MCF 10A (cell line): ENCODE measurements at regions of chr17 and their contacts with region 1.

Region 1: DNA sequence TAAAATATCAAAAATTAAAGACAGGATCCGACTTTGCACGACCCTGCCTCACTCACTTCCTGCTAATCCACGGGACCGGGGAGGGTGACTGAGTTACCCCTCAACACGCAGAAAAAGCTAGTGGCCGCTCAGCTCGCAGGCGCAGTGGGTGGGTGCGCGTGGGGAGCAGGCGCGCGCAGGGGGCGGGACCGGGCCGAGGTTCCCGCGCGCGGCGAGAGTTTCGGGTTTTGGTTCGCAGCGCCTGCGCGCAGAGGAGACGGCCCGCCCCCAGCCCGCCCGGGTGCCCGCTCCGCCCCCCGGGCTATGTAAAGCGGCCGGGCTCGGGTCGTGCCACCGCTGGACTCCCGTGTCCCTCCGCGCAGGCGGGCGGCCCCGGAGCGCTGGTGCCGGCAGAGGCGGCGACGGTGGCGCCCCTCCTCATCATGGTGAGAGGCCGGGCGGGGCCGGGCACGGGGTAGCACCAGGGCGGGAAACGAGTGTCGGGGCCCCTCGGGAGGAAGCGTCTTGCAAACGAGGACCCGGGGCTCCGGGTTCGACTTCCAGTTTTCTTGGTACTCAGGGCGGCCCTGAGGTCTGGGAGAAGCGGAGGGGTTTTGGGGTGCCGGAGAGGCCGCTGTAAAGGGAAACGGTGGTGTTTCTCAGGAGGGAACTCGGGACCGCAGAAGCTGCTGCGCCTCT is at the start of gene CNP:
- DNase-seq: peak; percentile 88
- H3K4me3 Mint-ChIP-seq: peak within 1 kb of the TSS; percentile 79
- H3K27ac Mint-ChIP-seq: peak within 1 kb of the TSS; percentile 77
- H3K4me1 Mint-ChIP-seq: peaks cover 25% of the 10 kb centered on the region
- H3K27me3 Mint-ChIP-seq: no peaks in the 10 kb centered on the region
- CTCF ChIP-seq: no peak
- total RNA-seq, gene CNP: 42.6 and 46.2 TPM in 2 replicates

Region 2: DNA sequence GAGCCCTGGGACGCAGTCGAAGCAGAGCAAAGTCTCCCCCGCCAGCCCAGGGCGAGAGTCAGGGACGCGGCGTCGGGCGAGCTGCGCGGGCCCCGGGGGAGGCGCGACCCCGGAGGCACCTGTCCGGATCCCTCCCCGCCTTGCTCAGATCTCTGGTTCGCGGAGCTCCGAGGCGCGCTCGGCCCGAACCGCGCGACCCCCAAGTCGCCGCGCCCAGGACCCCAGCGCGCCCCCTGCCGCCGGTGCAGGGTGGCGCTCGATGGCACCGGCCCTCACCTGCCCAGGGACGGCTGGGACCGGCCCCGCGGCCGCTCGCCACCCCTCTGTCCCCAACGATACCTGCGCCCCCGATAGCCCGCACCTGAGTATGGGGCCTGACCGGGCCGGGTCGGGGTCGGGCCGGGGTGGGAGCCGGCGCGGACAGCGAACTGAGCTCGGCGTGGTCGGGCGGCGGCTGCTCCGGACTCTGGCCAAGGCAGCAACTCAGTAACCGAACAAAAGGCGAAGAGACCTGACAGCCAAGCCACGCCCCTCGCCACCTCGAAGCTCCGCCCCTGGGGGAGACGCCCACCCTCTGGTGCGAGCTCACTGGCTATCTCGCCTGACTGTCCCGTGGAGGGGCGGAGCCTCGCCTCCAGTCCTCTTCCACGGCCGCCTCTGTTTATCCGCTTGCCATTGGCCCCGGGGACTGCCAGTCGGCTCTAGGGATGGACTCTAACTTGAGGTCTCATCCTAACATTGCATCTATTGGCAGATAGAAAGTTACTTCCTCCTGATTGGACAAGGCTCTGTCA is 180.2 kb before region 1 on chr17 and contains the start of gene JUP:
- CTCF ChIA-PET with region 1: no interaction called
- POLR2A ChIA-PET with region 1: interaction called, 15 read pairs
- intact Hi-C with region 1: no loop called
- DNase-seq: peak; percentile 100
- H3K4me3 Mint-ChIP-seq: peak within 1 kb of the TSS; percentile 74
- H3K27ac Mint-ChIP-seq: peak within 1 kb of the TSS; percentile 70
- H3K4me1 Mint-ChIP-seq: peaks cover 33% of the 10 kb centered on the region
- H3K27me3 Mint-ChIP-seq: no peaks in the 10 kb centered on the region
- CTCF ChIP-seq: peak; percentile 77
- total RNA-seq, gene JUP: 112 and 131 TPM in 2 replicates

Region 3: GRCh38 chr17:41885733-41886132 is 80.9 kb before region 1 on chr17:
- CTCF ChIA-PET with region 1: no interaction called
- POLR2A ChIA-PET with region 1: no interaction called
- intact Hi-C with region 1: no loop called
- DNase-seq: no peak
- H3K4me3 Mint-ChIP-seq: no peak overlapping the region
- H3K27ac Mint-ChIP-seq: no peak overlapping the region
- H3K4me1 Mint-ChIP-seq: no peaks in the 10 kb centered on the region
- H3K27me3 Mint-ChIP-seq: no peaks in the 10 kb centered on the region
- CTCF ChIP-seq: peak; percentile 25

Region 4: GRCh38 chr17:41918314-41919164 is 48.1 kb before region 1 on chr17 and contains the start of gene ACLY:
- CTCF ChIA-PET with region 1: interaction called, 5 read pairs
- POLR2A ChIA-PET with region 1: interaction called, 65 read pairs
- intact Hi-C with region 1: no loop called
- DNase-seq: peak; percentile 98
- H3K4me3 Mint-ChIP-seq: peak within 1 kb of the TSS; percentile 87
- H3K27ac Mint-ChIP-seq: peak within 1 kb of the TSS; percentile 78
- H3K4me1 Mint-ChIP-seq: peaks cover 30% of the 10 kb centered on the region
- H3K27me3 Mint-ChIP-seq: no peaks in the 10 kb centered on the region
- CTCF ChIP-seq: no peak
- total RNA-seq, gene ACLY: 67.7 and 67.9 TPM in 2 replicates

Region 5: DNA sequence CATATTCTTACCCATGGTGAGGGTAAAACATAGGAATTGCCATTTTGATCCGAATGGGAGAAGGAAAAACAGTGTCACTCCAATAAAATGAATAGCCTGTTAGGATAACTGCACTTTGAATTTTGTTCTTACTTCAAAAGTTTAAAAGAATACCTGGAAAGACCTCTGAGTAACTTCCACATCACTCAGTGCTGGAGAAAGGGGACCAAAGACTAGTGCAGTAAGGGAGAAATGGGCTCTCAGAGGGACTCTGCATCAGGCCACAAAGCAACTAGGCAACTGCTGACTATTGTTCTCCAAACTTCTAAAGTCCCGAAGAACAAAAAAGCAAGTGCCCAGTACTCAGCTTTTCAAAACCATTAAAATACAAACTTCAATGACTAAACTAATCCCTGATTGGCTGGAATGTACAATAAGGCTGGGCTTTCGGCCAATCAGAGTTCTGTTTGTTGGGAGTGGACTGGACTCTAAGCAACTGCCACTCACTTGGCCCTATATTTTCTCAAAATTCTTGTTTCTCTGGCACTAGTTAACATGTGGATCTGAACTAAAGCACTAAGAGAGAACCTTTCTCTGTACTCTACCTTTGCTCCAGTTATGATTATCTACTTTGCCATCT is 44.4 kb after region 1 on chr17:
- CTCF ChIA-PET with region 1: interaction called, 4 read pairs
- POLR2A ChIA-PET with region 1: interaction called, 138 read pairs
- intact Hi-C with region 1: loop called (anchors 2 kb)
- DNase-seq: peak; percentile 64
- H3K4me3 Mint-ChIP-seq: peak overlapping the region; percentile 47
- H3K27ac Mint-ChIP-seq: peak overlapping the region; percentile 64
- H3K4me1 Mint-ChIP-seq: peaks cover 28% of the 10 kb centered on the region
- H3K27me3 Mint-ChIP-seq: no peaks in the 10 kb centered on the region
- CTCF ChIP-seq: no peak

Region 6: DNA sequence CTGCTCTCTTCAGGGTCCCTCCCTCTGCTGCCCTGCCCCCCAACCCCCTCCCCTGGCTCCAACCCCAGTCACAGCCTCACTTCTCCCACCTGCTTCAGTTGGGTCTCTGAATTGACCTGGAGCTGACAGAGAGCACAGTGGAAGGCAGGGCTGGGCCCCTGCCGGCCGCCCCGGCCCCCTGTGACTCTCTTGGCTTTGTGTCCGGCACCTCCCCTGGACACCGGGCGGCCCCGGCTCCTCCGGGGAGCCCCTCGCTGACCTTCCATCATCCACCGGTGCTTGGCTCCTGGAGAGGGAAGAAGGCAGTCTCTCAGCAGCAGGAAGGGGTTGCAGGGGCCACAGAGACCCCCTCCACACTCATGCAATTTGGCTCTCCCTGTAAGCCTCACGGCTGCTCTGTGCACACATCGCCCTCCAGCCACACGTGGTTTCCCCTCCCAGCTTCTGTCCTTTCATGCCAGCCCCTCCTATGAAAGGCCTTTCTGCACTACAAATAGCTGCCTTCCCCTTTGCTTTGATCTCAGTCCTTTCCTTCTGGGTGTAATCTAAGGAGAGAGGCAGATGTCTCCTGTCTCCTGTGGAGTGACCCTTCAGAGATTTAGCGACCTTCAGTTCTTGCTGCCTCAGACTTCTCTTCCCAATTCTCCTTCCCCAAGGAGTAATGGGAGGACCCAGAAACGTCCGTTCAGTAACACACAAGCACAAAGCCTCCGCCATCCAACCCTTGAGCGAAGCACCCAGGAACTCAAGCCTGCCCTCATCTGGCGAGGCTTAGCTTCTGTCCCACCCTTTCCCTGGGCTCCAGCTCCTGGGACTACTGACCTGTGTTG is 61.6 kb after region 1 on chr17:
- CTCF ChIA-PET with region 1: interaction called, 14 read pairs
- POLR2A ChIA-PET with region 1: no interaction called
- intact Hi-C with region 1: loop called (anchors 1 kb)
- DNase-seq: no peak
- H3K4me3 Mint-ChIP-seq: no peak overlapping the region
- H3K27ac Mint-ChIP-seq: no peak overlapping the region
- H3K4me1 Mint-ChIP-seq: peaks cover 6% of the 10 kb centered on the region
- H3K27me3 Mint-ChIP-seq: no peaks in the 10 kb centered on the region
- CTCF ChIP-seq: no peak

Region 7: DNA sequence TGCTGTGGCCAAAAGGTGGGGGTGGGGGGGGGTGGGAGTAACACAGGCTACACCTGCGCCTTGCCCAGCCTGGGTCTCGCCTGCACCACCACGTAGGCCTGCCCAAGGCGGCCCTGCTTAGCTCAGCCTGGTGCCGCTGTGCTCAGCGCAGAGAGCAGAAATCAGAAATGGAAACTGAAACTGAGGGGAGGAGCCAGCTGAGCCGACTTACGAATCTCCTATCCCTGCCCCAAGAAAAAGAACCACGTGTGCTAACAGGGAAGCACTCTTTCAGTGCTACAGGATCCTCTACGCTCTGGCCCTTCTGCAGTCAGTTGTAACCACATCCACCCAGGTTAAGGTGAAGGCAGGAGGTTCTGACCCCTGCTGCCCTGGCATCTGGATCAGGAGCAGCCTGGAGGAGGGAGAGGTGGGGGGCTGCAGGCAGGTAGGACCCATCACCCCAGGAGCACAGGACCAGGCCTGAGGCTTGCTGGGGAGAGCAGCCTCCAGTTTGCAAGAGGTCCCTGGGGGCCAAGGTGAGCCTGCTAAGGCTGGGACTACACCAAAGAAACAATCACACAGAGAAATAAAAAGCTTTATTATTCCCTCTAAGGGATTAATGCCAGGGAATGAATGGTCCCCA is 146.1 kb after region 1 on chr17 and contains the start of gene DHX58:
- CTCF ChIA-PET with region 1: interaction called, 16 read pairs
- POLR2A ChIA-PET with region 1: interaction called, 17 read pairs
- intact Hi-C with region 1: loop called (anchors 1 kb)
- DNase-seq: peak; percentile 64
- H3K4me3 Mint-ChIP-seq: peak within 1 kb of the TSS; percentile 67
- H3K27ac Mint-ChIP-seq: peak within 1 kb of the TSS; percentile 35
- H3K4me1 Mint-ChIP-seq: no peaks in the 10 kb centered on the region
- H3K27me3 Mint-ChIP-seq: no peaks in the 10 kb centered on the region
- CTCF ChIP-seq: no peak
- total RNA-seq, gene DHX58: 2.8 and 4.2 TPM in 2 replicates

Region 8: GRCh38 chr17:42153919-42154742 is 187.5 kb after region 1 on chr17:
- CTCF ChIA-PET with region 1: no interaction called
- POLR2A ChIA-PET with region 1: interaction called, 13 read pairs
- intact Hi-C with region 1: no loop called
- DNase-seq: no peak
- H3K4me3 Mint-ChIP-seq: peak overlapping the region; percentile 84
- H3K27ac Mint-ChIP-seq: peak overlapping the region; percentile 90
- H3K4me1 Mint-ChIP-seq: peaks cover 16% of the 10 kb centered on the region
- H3K27me3 Mint-ChIP-seq: no peaks in the 10 kb centered on the region
- CTCF ChIP-seq: no peak